Activated T-helper 1 cell treated with anti-CD3 and anti-CD28 coated beads, Interleukin-12 subunit alpha, Interleukin-12 subunit beta, Interleukin-2, Interleukin-4 antibody, amounts not matched to agents 30 ng/mL and 10 ng/mL and 1 ng/mL, durations not matched to agents 14 hours and 24 hours and 36 hours (primary cell): ENCODE measurements at regions of chr4 and their contacts with region 1.

Region 1: GRCh38 chr4:122783301-122784215 is 43.1 kb upstream of the FGF2 start:
- DNase-seq: no peak
- H3K4me3 Mint-ChIP-seq: peak overlapping the region; percentile 13
- H3K27ac Mint-ChIP-seq: no peak overlapping the region
- H3K4me1 Mint-ChIP-seq: peaks cover 40% of the 10 kb centered on the region
- H3K27me3 Mint-ChIP-seq: peaks cover 11% of the 10 kb centered on the region

Region 2: DNA sequence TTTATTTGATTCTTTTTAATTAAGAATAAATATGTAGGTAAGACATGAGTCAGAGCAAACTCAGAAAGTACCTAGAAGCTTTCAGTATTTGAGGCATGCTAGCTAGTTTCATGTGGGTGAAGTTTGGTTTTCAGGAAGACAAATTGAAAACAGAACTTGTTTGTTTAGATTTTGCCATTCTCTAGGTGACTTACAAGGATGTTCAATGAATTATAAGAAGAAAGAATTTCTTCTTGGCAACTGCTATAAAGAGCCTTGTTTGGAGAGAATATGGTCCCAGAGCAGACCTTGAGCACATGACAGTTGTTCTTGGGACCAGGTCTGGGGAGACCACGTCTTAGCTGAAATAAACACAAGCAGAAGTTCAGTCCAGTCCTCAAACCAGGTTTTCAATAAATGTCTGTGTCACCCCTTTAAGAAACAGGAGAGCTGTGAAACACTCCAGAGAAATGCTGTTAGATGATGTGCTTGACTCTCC is 124.7 kb before region 1 on chr4:
- intact Hi-C with region 1: loop called (anchors 1 kb)
- DNase-seq: no peak
- H3K4me3 Mint-ChIP-seq: peak overlapping the region; percentile 66
- H3K27ac Mint-ChIP-seq: peak overlapping the region; percentile 94
- H3K4me1 Mint-ChIP-seq: peaks cover 59% of the 10 kb centered on the region
- H3K27me3 Mint-ChIP-seq: no peaks in the 10 kb centered on the region

Region 3: DNA sequence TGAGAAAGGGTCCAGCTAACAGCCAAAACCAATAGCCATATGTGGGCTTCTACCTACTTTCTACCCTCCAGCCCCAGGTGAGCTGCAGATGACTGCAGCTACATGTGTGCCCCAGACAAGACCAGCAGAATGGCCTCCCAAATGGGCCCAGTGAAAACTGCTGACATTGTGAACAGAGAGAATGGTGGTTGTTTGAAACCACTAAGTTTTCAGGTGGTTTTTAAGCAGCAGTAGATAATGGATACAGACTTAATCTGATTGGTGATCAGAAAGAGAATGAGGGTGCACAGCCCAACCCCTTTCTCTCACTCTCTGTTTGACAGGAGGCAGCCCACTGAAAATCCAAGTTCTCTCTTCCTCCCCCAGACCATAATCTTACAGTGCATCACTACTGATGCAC is 93.6 kb before region 1 on chr4:
- intact Hi-C with region 1: no loop called
- DNase-seq: peak; percentile 22
- H3K4me3 Mint-ChIP-seq: peak overlapping the region; percentile 43
- H3K27ac Mint-ChIP-seq: peak overlapping the region; percentile 71
- H3K4me1 Mint-ChIP-seq: peaks cover 66% of the 10 kb centered on the region
- H3K27me3 Mint-ChIP-seq: no peaks in the 10 kb centered on the region

Region 4: GRCh38 chr4:122806981-122807679 is 23.6 kb after region 1 on chr4:
- intact Hi-C with region 1: loop called (anchors 2 kb)
- DNase-seq: no peak
- H3K4me3 Mint-ChIP-seq: no peak overlapping the region
- H3K27ac Mint-ChIP-seq: peak overlapping the region; percentile 32
- H3K4me1 Mint-ChIP-seq: peaks cover 9% of the 10 kb centered on the region
- H3K27me3 Mint-ChIP-seq: peaks cover 9% of the 10 kb centered on the region

Region 5: DNA sequence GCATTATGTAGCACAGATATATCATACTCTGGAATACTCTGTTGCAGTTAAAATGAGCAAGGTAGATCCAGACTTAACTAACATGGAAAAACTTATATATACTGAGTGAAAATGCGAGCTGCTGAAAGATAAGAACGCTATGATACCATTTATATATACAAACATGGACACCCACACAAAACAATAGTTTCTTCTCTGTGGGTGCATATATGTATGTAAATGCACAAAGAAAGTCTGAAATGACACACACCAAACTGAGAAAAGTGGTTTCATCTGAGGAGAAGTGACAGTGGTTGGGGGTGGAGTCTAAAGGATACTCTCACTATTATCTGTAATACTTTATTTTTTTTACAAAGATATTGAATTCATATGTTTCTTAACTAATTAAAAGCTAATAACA is 30.9 kb after region 1 on chr4:
- intact Hi-C with region 1: loop called (anchors 1 kb)
- DNase-seq: no peak
- H3K4me3 Mint-ChIP-seq: no peak overlapping the region
- H3K27ac Mint-ChIP-seq: peak overlapping the region; percentile 38
- H3K4me1 Mint-ChIP-seq: peaks cover 12% of the 10 kb centered on the region
- H3K27me3 Mint-ChIP-seq: peaks cover 16% of the 10 kb centered on the region

Region 6: GRCh38 chr4:122827879-122828601 is 44.5 kb after region 1 on chr4:
- intact Hi-C with region 1: loop called (anchors 1 kb)
- DNase-seq: peak; percentile 40
- H3K4me3 Mint-ChIP-seq: peak overlapping the region; percentile 78
- H3K27ac Mint-ChIP-seq: peak overlapping the region; percentile 64
- H3K4me1 Mint-ChIP-seq: peaks cover 34% of the 10 kb centered on the region
- H3K27me3 Mint-ChIP-seq: peaks cover 39% of the 10 kb centered on the region